ENCODE measurements at regions of chr7 and their contacts with region 1.

Region 1: GRCh38 chr7:65872776-65873581 is at the start of gene VKORC1L1:
- DNase-seq: peak; percentile 95 to 98
- ATAC-seq: peak; percentile 96 to 99 (median 98)
- H3K4me3 ChIP-seq: peak within 1 kb of the TSS; percentile 50 to 92 (median 80)
- H3K27ac ChIP-seq: peak within 1 kb of the TSS in 9 of 10 donors; percentile 28 to 85 (median 81)
- H3K4me1 ChIP-seq: peaks cover 0 to 32% (median 14%) of the 10 kb centered on the region in 9 donors
- H3K27me3 ChIP-seq: no peaks in the 10 kb centered on the region
- CTCF ChIP-seq: no peak
- total RNA-seq, gene VKORC1L1: 15.3 to 23.8 (median 17.7) TPM

Region 2: DNA sequence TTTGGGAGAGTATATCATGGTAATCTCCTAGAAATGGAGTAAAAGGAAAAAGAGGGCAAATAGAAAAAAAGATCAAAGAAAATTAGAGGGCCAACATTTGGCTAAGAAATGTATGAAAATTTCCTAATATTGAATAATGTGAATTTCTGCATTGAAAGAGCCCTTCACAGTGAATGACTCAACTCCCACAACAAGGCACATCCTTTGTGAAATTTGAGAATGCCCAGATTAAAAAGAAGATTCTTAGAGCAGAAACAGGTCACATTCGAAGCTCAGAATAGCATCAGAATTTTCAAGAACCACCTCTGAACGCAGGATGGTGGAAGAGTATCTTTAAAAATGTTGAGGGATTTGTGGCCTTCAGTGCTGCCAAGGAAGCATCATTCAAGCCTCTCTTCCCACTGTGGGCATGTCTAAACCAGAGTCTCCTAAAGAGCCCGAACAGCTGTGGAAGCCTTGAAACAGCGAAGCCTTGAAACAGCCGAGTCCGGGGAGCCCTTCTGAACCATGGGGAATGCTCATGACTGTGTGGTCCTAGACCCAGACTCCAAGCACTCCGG is 65.4 kb after region 1 on chr7:
- intact Hi-C with region 1: loop called in 1 of 10 experiments (anchors 10 kb)
- DNase-seq: no peak
- ATAC-seq: no peak
- H3K4me3 ChIP-seq: no peak overlapping the region
- H3K27ac ChIP-seq: no peak overlapping the region
- H3K4me1 ChIP-seq: no peaks in the 10 kb centered on the region
- H3K27me3 ChIP-seq: no peaks in the 10 kb centered on the region
- CTCF ChIP-seq: no peak

Region 3: GRCh38 chr7:65974191-65974801 is 101.3 kb after region 1 on chr7:
- intact Hi-C with region 1: loop called in 1 of 10 experiments (anchors 10 kb)
- DNase-seq: no peak
- ATAC-seq: peak in 3 of 8 donors; percentile 9 to 35 (median 27)
- H3K4me3 ChIP-seq: no peak overlapping the region
- H3K27ac ChIP-seq: no peak overlapping the region
- H3K4me1 ChIP-seq: no peaks in the 10 kb centered on the region
- H3K27me3 ChIP-seq: no peaks in the 10 kb centered on the region
- CTCF ChIP-seq: no peak

Region 4: DNA sequence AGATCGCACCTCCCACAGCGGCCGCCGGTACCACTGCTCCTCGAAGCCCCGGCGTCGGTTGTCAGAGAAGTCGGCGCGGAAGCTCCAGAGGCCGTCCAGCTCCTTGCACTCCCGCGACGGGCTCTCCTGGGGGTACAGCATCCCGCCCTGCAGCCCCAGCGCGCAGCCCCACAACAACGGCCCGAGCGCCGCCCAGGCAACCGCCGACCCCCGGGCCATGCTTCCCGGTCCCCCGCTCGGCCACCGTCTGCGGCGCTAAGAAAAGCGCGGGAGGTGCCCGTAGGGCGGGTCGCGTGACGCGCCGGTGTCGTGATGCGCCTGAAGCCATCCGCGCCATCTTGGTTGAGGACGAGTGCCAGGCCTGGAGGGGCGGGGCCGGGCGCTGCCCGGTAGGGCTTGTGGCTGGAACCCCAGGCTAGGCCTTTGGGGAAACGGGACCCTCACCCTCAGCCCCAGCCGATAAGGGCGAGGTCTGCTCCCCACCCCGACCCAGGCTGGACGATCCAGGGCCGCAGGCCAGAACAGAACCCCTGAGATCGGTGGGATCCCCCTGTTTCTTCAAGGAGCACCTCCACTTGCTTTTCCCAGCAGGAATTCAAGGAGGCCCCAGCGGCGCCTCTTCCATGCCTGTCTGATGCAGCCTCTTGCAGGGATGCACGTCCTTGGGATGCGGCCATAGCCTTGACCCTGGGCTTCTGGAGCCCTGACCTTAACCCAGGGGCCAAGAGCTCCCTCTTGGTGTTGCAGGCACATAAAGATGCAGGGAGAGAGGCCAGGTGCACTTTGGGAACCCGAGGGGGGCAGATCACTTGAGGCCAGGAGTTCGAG is 109.2 kb after region 1 on chr7 and contains the start of gene GUSB:
- intact Hi-C with region 1: loop called in 4 of 10 experiments (anchors 10 kb)
- DNase-seq: peak; percentile 93 to 94
- ATAC-seq: peak; percentile 96 to 98 (median 97)
- H3K4me3 ChIP-seq: peak within 1 kb of the TSS; percentile 65 to 99 (median 91)
- H3K27ac ChIP-seq: peak within 1 kb of the TSS; percentile 25 to 96 (median 89)
- H3K4me1 ChIP-seq: peaks cover 0 to 28% (median 21%) of the 10 kb centered on the region in 9 donors
- H3K27me3 ChIP-seq: no peaks in the 10 kb centered on the region
- CTCF ChIP-seq: no peak
- total RNA-seq, gene GUSB: 10.8 to 30.6 (median 15.6) TPM

Region 5: DNA sequence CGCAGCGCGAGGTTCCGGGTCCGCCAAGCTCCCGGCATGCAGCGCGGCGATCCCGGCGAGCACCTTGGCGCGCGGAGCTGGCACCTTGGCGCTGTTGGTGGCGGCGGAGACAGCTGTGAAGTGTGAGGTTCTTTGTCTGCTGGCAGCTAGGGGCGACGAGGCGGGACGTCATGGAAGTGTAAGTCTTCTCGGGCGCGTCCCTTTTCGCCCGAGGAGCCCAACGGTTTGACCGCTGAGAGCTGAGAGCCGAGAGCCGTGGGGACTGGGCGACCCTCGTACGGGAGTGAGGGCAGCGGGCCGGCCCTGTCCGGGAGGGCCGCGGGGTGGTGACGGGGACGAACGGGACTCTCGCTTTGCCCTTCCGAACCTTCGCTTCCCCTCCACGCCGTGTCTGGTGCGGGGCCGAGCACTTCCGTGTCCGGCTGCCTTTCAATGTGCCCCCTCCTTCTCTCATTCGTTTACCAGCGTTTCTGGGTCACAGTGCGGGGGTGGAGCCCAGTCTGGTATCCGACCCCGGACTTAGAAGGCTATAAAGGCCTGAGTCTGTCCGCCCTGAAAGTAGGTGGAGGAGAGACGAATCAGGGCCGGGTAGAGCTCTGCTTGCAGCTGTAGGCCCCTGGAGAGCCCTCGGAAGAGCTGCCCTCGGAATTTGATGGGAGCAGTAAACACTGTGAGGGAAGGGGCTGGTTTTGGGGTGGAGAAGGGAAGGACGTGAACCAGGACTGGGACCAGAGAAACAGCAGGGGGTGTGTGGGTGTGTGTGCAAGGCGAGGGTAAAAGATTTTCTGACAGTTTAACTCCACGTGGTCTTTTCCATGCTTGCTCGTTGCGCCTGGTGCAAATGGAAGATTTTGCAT is 242.0 kb after region 1 on chr7 and contains the start of gene CRCP:
- intact Hi-C with region 1: no loop called
- DNase-seq: peak; percentile 79 to 83
- ATAC-seq: peak; percentile 95 to 97 (median 96)
- H3K4me3 ChIP-seq: peak within 1 kb of the TSS; percentile 64 to 99 (median 86)
- H3K27ac ChIP-seq: peak within 1 kb of the TSS; percentile 87 to 99 (median 95)
- H3K4me1 ChIP-seq: peaks cover 4 to 55% (median 45%) of the 10 kb centered on the region in 9 donors
- H3K27me3 ChIP-seq: no peaks in the 10 kb centered on the region
- CTCF ChIP-seq: peak in 3 of 9 donors; percentile 31 to 46 (median 39)
- total RNA-seq, gene CRCP: 15.4 to 31.1 (median 23.1) TPM

Region 6: GRCh38 chr7:66125052-66125708 is 252.2 kb after region 1 on chr7:
- intact Hi-C with region 1: no loop called
- DNase-seq: no peak
- ATAC-seq: peak in 5 of 8 donors; percentile 33 to 48 (median 38)
- H3K4me3 ChIP-seq: no peak overlapping the region
- H3K27ac ChIP-seq: peak overlapping the region in 7 of 10 donors; percentile 9 to 71 (median 47)
- H3K4me1 ChIP-seq: peaks cover 0 to 63% (median 29%) of the 10 kb centered on the region in 9 donors
- H3K27me3 ChIP-seq: no peaks in the 10 kb centered on the region
- CTCF ChIP-seq: no peak